PC-9 (cell line): ENCODE measurements at regions of chr17 and their contacts with region 1.

Region 1: GRCh38 chr17:69607162-69607834 is 192.8 kb downstream of the MAP2K6 start:
- DNase-seq: peak in 1 of 2 experiments; percentile 31
- H3K4me3 ChIP-seq: no peak overlapping the region
- H3K27ac ChIP-seq: no peak overlapping the region
- H3K4me1 ChIP-seq: peaks cover 18% of the 10 kb centered on the region
- H3K27me3 ChIP-seq: no peaks in the 10 kb centered on the region
- CTCF ChIP-seq: peak; percentile 82

Region 2: DNA sequence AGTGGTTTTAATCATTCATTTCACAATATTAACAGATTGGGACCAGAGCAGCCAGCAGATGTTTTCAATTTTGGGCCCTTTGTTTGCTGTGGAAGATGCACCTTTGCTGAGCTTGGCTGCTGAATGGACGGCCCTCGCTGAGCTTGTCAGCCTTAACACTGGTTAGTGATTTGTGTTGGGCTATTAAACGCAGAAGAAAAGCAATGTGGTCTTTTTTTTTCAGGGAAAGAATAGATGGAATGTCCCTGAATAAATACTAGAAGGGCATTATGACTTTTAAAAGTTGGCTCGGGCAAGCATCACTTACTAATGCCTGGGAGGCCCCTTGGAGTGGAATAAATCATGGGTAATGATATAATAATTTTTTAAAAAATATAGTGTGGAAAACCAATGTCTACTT is 104.2 kb after region 1 on chr17:
- CTCF ChIA-PET with region 1: no interaction called
- POLR2A ChIA-PET with region 1: no interaction called
- intact Hi-C with region 1: no loop called
- DNase-seq: no peak
- H3K4me3 ChIP-seq: no peak overlapping the region
- H3K27ac ChIP-seq: no peak overlapping the region
- H3K4me1 ChIP-seq: peaks cover 7% of the 10 kb centered on the region
- H3K27me3 ChIP-seq: no peaks in the 10 kb centered on the region
- CTCF ChIP-seq: no peak

Region 3: DNA sequence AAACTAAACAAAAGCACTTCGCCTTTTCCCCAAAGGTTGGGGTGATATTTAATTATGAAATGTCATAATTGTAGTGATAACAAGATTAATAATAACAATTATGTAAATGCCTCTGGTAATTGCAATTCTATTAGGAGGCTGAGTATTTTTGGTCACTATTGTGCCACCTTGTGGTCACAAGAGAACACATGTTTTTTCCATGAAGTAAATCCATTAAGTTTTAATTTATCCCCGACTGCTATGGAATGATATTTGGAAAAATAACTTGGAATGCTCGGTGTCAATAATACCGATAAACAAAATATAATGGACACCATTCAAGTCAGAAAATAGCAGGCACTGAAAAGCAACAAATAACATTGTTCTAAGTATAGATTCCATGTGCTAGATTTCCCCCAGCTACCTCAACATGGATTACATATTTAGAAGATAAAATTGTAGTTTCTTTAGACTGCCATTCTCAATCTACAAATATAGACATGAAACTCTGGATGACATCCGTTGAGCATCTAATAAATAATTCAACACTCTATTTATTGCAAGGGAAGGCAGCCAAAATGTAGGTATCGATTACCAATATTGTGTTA is 537.1 kb after region 1 on chr17:
- CTCF ChIA-PET with region 1: no interaction called
- POLR2A ChIA-PET with region 1: no interaction called
- intact Hi-C with region 1: loop called (anchors 2 kb)
- DNase-seq: no peak
- H3K4me3 ChIP-seq: no peak overlapping the region
- H3K27ac ChIP-seq: no peak overlapping the region
- H3K4me1 ChIP-seq: no peaks in the 10 kb centered on the region
- H3K27me3 ChIP-seq: no peaks in the 10 kb centered on the region
- CTCF ChIP-seq: peak; percentile 86

Region 4: DNA sequence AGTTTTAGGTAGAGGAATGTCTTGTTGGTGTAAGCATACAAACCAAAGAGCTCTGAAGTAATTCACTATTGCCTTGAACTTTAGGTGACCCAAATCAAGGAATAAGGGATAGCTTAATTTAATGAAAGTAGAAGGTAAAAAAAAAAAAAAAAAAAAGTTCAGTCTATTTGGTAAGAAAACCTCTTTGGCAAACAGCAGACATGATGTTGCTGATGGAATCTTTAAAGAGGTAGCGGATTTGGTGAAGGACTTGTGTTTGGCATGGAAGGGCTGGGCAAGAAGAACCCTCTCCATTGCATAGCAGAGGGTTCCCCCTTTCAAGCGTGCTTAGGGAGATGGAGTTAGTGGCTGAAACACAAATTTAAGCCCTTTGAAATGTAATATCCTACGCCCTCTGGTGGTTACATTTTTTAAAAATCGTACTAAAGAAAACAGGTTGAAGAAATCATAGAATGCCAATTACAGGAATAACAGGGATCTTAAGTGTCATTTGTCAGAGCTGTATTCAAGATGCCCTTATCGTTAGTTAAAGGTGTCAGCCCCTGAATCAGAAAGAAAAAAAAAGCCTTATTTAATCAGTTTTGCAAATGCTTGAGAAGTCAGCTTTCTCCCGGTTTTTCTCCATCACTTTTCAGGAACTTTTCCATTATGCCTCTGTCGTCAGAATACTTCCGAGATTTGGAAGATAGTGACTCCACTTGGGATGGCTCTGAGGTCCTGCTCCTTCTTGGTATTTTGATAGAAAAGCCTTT is 945.1 kb after region 1 on chr17:
- CTCF ChIA-PET with region 1: no interaction called
- POLR2A ChIA-PET with region 1: no interaction called
- intact Hi-C with region 1: loop called (anchors 5 kb)
- DNase-seq: no peak
- H3K4me3 ChIP-seq: no peak overlapping the region
- H3K27ac ChIP-seq: no peak overlapping the region
- H3K4me1 ChIP-seq: no peaks in the 10 kb centered on the region
- H3K27me3 ChIP-seq: no peaks in the 10 kb centered on the region
- CTCF ChIP-seq: peak; percentile 76

Region 5: DNA sequence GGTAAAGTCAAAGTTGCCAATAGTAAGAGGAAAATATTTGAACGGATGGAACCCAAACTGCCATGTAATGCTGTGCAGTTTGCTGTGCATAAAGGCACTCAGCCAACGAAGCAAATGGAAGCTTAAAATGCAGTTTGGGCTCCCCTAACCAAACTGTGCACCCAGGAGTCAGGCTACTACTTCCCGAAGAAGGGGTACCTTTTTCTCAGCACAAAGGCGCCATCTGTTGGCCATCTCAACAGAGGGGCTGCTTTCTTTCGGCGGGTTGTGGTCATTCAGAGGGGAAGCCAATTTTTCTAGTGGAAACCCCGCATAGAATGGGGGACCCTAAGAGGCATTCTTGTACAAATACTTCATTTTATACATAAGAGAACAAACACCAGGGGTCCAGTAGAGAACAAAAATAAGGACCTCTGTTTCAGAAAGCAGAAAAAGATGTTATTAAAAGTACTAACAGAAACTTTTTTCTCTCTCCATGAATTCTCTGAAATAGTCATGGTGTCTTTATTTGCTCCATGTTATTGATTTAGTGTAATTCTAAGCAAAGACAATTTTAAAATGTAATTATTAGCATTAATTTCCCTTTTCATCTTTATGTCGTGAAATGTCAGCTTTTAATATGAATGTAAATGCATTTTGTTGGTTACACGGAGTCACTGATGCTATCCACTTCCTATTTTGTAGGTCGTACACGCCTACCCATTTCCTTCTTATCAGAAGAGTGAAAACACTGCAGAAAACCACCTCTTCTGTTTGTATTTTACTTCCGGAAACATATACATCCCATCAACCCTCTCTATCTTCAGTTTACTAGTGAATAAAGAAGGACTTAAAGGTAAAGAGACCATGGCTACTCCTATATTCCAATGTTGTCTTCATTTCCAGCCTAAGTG is 1015.3 kb after region 1 on chr17:
- CTCF ChIA-PET with region 1: no interaction called
- POLR2A ChIA-PET with region 1: no interaction called
- intact Hi-C with region 1: loop called (anchors 2 kb)
- DNase-seq: peak in 1 of 2 experiments; percentile 39
- H3K4me3 ChIP-seq: no peak overlapping the region
- H3K27ac ChIP-seq: no peak overlapping the region
- H3K4me1 ChIP-seq: no peaks in the 10 kb centered on the region
- H3K27me3 ChIP-seq: no peaks in the 10 kb centered on the region
- CTCF ChIP-seq: peak; percentile 72